CD8-positive, alpha-beta T cell (primary cell): ENCODE measurements at regions of chr3 and their contacts with region 1.

Region 1: GRCh38 chr3:27467545-27467944 is 16.6 kb downstream of the SLC4A7 start:
- DNase-seq: peak in 2 of 9 experiments; percentile 54 to 69
- ATAC-seq: peak; percentile 91
- H3K4me3 ChIP-seq: no peak overlapping the region
- H3K4me3 Mint-ChIP-seq: no peak overlapping the region
- H3K27ac ChIP-seq: no peak overlapping the region
- H3K27ac Mint-ChIP-seq: peak overlapping the region; percentile 28
- H3K4me1 ChIP-seq: peaks cover 3% of the 10 kb centered on the region
- H3K4me1 Mint-ChIP-seq: peaks cover 28% of the 10 kb centered on the region
- H3K27me3 ChIP-seq: no peaks in the 10 kb centered on the region
- H3K27me3 Mint-ChIP-seq: no peaks in the 10 kb centered on the region
- CTCF ChIP-seq: peak; percentile 60

Region 2: GRCh38 chr3:27134165-27134796 is 333.3 kb before region 1 on chr3:
- CTCF ChIA-PET with region 1: no interaction called
- POLR2A ChIA-PET with region 1: no interaction called
- intact Hi-C with region 1: loop called (anchors 2 to 5 kb)
- DNase-seq: peak; percentile 5 to 77 (median 61)
- ATAC-seq: peak; percentile 78
- H3K4me3 ChIP-seq: no peak overlapping the region
- H3K4me3 Mint-ChIP-seq: no peak overlapping the region
- H3K27ac ChIP-seq: no peak overlapping the region
- H3K27ac Mint-ChIP-seq: no peak overlapping the region
- H3K4me1 ChIP-seq: no peaks in the 10 kb centered on the region
- H3K4me1 Mint-ChIP-seq: no peaks in the 10 kb centered on the region
- H3K27me3 ChIP-seq: no peaks in the 10 kb centered on the region
- H3K27me3 Mint-ChIP-seq: peaks cover 2% of the 10 kb centered on the region
- CTCF ChIP-seq: peak; percentile 91

Region 3: GRCh38 chr3:27312044-27312668 is 155.4 kb before region 1 on chr3:
- CTCF ChIA-PET with region 1: interaction called, 13 read pairs
- POLR2A ChIA-PET with region 1: no interaction called
- intact Hi-C with region 1: loop called (anchors 1 to 2 kb)
- DNase-seq: peak in 2 of 9 experiments; percentile 65 to 68
- ATAC-seq: peak; percentile 73
- H3K4me3 ChIP-seq: no peak overlapping the region
- H3K4me3 Mint-ChIP-seq: no peak overlapping the region
- H3K27ac ChIP-seq: no peak overlapping the region
- H3K27ac Mint-ChIP-seq: no peak overlapping the region
- H3K4me1 ChIP-seq: no peaks in the 10 kb centered on the region
- H3K4me1 Mint-ChIP-seq: peaks cover 2% of the 10 kb centered on the region
- H3K27me3 ChIP-seq: no peaks in the 10 kb centered on the region
- H3K27me3 Mint-ChIP-seq: peaks cover 2% of the 10 kb centered on the region
- CTCF ChIP-seq: peak; percentile 68

Region 4: DNA sequence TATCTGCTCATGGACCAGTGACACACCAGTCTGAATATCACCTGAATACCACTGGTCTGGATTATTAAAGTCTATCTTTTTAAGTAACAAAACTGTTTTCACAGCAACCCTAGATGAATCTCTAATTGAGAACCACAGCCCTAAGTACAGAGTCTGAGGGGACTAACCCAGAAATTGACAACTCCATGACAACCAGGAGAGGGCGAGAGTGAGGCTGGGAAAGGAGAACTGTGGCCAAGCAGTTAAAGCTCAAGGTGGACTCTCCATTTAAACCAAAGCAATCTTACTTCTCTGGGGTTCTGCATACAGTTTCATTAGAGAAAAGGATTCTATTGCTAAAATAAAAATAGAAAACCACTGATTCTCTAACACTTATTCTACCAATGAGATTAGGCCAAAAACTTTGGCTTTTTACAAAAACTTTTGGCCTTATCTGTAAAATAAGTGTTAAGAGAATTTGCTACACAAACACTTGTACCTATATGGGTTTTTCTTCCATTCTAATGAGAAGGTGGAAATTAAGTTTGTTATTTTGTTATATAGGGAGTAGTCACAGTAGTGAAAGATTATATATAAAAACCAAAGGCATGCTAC is 109.8 kb before region 1 on chr3:
- CTCF ChIA-PET with region 1: interaction called, 10 read pairs
- POLR2A ChIA-PET with region 1: no interaction called
- intact Hi-C with region 1: loop called (anchors 1 to 5 kb)
- DNase-seq: peak; percentile 11 to 77 (median 54)
- ATAC-seq: peak; percentile 87
- H3K4me3 ChIP-seq: no peak overlapping the region
- H3K4me3 Mint-ChIP-seq: no peak overlapping the region
- H3K27ac ChIP-seq: no peak overlapping the region
- H3K27ac Mint-ChIP-seq: no peak overlapping the region
- H3K4me1 ChIP-seq: peaks cover 13% of the 10 kb centered on the region
- H3K4me1 Mint-ChIP-seq: peaks cover 27% of the 10 kb centered on the region
- H3K27me3 ChIP-seq: no peaks in the 10 kb centered on the region
- H3K27me3 Mint-ChIP-seq: no peaks in the 10 kb centered on the region
- CTCF ChIP-seq: no peak

Region 5: DNA sequence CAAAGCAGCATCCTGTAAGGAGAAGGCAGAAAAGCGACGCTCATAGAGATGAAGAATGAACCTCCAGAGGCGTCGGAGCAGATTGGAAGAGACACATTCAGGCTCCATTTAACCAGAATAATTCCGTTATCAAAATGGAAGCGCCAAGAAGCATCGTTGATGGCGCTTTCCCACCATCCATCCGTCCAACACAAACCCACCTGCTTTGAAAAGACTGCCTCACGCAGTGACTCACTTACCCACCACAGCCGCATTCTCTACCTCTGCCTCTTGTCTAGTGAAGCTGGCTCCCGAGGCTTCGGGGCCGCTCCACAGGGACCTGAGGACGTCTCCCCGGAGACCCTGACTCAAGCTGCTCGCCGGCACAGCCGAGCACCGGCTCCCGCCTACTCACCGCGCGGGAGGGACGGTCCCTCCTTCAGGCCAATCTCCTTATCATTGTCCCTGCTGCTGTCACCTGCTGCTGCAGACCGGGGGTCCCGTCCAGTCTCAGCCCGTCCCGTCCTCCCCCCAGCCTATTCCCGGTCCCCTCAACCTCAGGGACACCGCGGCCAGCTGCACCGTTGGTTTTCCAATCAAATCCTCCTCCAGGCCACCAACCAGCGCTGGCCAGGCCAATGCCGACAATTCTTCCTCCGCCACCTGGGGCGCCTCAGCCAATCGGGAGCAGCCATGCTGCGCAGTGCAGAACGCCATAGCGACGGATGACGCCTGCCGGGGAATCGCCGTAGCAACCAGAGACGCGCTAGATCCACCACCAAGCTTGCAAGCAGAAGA is 98.5 kb before region 1 on chr3 and contains the start of gene NEK10:
- CTCF ChIA-PET with region 1: interaction called, 19 read pairs
- POLR2A ChIA-PET with region 1: interaction called, 3 read pairs
- intact Hi-C with region 1: loop called in 1 of 2 experiments (anchors 5 kb)
- DNase-seq: peak; percentile 86 to 94 (median 93)
- ATAC-seq: peak; percentile 96
- H3K4me3 ChIP-seq: peak within 1 kb of the TSS; percentile 85 to 89
- H3K4me3 Mint-ChIP-seq: peak within 1 kb of the TSS; percentile 97
- H3K27ac ChIP-seq: peak within 1 kb of the TSS; percentile 15 to 22
- H3K27ac Mint-ChIP-seq: peak within 1 kb of the TSS; percentile 81
- H3K4me1 ChIP-seq: peaks cover 8% of the 10 kb centered on the region
- H3K4me1 Mint-ChIP-seq: peaks cover 16% of the 10 kb centered on the region
- H3K27me3 ChIP-seq: no peaks in the 10 kb centered on the region
- H3K27me3 Mint-ChIP-seq: no peaks in the 10 kb centered on the region
- CTCF ChIP-seq: no peak
- total RNA-seq, gene NEK10: 0.22 to 0.94 TPM